ENCODE measurements at regions of chr18 and their contacts with region 1.

Region 1: DNA sequence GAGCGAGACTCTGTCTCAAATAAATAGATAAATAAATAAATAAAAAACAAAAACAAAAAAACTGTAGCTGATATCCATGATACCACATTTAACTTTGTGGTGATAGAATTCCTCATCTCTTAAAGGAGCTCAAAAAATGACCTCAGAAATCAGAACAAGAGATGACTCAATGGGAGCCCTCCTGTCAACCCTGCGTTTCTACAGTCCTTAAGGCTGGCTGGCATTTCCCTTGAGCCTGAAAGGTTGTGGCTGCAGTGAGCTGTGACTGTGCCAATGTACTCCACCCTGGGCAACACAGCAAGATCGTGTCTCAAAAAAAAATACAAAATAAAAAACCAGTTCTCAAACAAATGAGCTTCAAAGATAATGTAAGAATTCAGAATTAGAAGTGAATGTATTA is 40.4 kb downstream of the CHST9 start:
- DNase-seq: no peak
- H3K4me3 ChIP-seq: no peak overlapping the region
- H3K27ac ChIP-seq: no peak overlapping the region
- H3K4me1 ChIP-seq: no peaks in the 10 kb centered on the region
- H3K27me3 ChIP-seq: no peaks in the 10 kb centered on the region
- CTCF ChIP-seq: no peak

Region 2: GRCh38 chr18:26827581-26827980 is 317.1 kb before region 1 on chr18:
- CTCF ChIA-PET with region 1: no interaction called
- dilution Hi-C with region 1: no loop called
- in situ Hi-C with region 1: no loop called
- intact Hi-C with region 1: no loop called
- DNase-seq: no peak
- H3K4me3 ChIP-seq: no peak overlapping the region
- H3K27ac ChIP-seq: no peak overlapping the region
- H3K4me1 ChIP-seq: no peaks in the 10 kb centered on the region
- H3K27me3 ChIP-seq: peaks cover 3% of the 10 kb centered on the region
- CTCF ChIP-seq: no peak

Region 3: DNA sequence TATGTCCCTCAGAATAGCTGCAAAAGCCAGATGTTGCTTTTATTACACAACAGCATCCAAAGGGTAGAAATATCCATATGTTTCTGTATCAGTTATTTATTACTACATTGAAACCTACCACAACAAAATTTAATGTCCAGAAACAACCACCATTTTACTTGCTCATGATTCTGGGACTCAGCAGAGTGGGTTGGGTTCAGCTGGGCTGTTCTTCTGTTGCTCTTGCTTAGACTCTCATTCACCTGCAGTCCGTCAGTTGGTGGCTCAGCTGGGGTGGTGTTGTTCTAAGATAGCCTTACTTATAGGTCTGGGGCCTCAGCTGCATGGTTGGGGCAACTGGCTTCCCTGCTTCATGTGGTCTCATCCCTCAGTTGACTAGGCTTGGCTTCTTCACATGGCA is 300.9 kb before region 1 on chr18:
- CTCF ChIA-PET with region 1: no interaction called
- dilution Hi-C with region 1: no loop called
- in situ Hi-C with region 1: no loop called
- intact Hi-C with region 1: no loop called
- DNase-seq: no peak
- H3K4me3 ChIP-seq: no peak overlapping the region
- H3K27ac ChIP-seq: no peak overlapping the region
- H3K4me1 ChIP-seq: no peaks in the 10 kb centered on the region
- H3K27me3 ChIP-seq: no peaks in the 10 kb centered on the region
- CTCF ChIP-seq: no peak

Region 4: DNA sequence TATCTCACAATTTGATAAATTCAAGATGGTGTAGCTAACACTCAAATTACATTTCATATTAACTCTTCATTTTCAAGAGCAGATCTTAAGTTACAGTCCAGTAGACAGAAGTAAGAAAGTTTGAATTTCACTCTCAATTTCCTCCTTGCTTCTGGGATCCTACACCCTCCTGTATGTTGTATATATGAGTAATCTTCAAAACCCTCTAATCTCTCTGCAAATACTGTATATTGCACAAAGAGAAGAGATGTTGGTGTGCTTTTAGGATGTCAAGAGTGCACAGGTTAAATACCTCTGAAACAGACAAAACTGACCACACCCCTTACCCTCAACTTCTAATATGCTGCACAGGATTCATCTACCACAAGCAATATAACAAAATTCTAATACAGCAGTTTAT is 33.8 kb after region 1 on chr18:
- CTCF ChIA-PET with region 1: no interaction called
- dilution Hi-C with region 1: no loop called
- in situ Hi-C with region 1: no loop called
- intact Hi-C with region 1: loop called (anchors 1 kb)
- DNase-seq: no peak
- H3K4me3 ChIP-seq: no peak overlapping the region
- H3K27ac ChIP-seq: no peak overlapping the region
- H3K4me1 ChIP-seq: no peaks in the 10 kb centered on the region
- H3K27me3 ChIP-seq: no peaks in the 10 kb centered on the region
- CTCF ChIP-seq: no peak

Region 5: DNA sequence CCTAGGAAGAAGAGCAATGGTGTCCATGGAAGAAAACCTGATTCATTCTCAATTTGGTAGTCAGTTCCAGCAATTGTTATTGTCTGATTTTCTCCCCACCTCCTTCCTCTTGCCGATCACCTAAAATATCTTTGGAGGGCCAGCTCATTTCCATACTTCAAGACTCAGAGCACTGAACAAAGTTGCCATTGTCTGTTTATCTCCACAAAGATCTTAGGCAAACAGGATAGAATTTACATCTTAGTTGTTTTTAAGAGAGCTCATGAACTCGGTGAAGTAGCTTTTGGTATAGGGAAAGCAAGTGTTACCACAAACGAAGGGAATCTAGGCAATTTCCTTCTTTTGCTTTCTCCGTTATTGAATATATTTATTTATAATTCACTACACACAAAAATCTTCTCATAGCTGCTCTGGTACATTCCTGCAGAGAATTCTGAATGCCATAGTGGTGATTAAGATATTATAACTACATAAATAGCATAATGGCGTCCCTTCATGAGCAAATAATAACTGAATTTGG is 81.9 kb after region 1 on chr18:
- CTCF ChIA-PET with region 1: no interaction called
- dilution Hi-C with region 1: no loop called
- in situ Hi-C with region 1: no loop called
- intact Hi-C with region 1: no loop called
- DNase-seq: peak; percentile 81
- H3K4me3 ChIP-seq: peak overlapping the region in 1 of 3 experiments; percentile 20
- H3K27ac ChIP-seq: peak overlapping the region; percentile 66
- H3K4me1 ChIP-seq: peaks cover 25% of the 10 kb centered on the region
- H3K27me3 ChIP-seq: no peaks in the 10 kb centered on the region
- CTCF ChIP-seq: no peak

Region 6: GRCh38 chr18:27263369-27263768 is 118.7 kb after region 1 on chr18:
- CTCF ChIA-PET with region 1: no interaction called
- dilution Hi-C with region 1: no loop called
- in situ Hi-C with region 1: no loop called
- intact Hi-C with region 1: no loop called
- DNase-seq: no peak
- H3K4me3 ChIP-seq: no peak overlapping the region
- H3K27ac ChIP-seq: no peak overlapping the region
- H3K4me1 ChIP-seq: no peaks in the 10 kb centered on the region
- H3K27me3 ChIP-seq: no peaks in the 10 kb centered on the region
- CTCF ChIP-seq: no peak

Measured in mammary epithelial cell (primary cell).